ENCODE measurements at regions of chr1 and their contacts with region 1.

Region 1: DNA sequence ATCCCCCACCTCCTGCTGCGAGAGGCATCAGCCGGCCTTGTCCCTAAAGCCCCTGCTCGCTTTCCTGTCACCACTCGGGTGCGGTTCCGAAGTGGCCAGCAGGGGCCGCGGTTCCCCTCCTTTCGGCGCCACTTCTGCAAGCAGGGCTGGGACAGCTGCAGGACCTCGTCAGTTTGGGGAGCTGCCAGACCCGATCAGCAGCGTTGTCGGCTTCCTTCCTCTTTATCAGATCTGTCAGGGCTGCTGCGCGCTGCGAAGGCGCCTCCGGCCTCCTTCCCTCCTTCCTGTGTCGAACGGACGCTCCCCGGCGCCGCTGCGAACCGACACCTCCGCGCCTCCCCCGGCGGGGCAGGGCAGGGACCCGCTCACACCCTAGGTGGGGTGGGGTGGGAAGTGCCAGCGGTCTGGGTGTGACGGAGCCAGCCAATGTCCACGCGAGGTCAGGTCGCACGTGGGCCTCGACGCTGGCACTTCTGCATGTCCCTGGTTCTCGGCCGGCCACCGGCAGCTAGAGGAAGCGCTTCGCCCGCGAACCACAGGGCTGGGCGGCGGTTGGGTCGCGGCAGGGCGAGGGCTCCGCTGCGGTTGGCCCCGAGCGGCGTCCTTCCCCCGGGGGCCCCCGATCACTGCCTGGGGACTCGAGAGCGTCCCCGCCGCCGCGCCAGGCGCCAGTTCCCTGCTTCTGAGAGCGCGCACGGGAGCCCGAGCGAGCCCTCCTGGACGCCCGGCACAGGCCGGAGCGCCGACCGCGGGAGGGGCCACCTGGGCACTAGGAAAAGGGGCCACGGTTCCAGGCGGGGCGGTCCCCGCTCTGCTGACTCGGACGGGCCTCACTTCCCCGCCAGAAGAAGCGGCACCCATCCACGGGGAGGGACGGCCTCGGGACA is 81.8 kb downstream of the RUNX3 start:
- DNase-seq: peak; percentile 94
- ATAC-seq: peak; percentile 95
- H3K4me3 Mint-ChIP-seq: peak overlapping the region; percentile 58
- H3K27ac Mint-ChIP-seq: no peak overlapping the region
- H3K4me1 Mint-ChIP-seq: peaks cover 8% of the 10 kb centered on the region
- H3K27me3 Mint-ChIP-seq: no peaks in the 10 kb centered on the region

Region 2: GRCh38 chr1:24659993-24660665 is 188.1 kb before region 1 on chr1:
- CTCF ChIA-PET with region 1: no interaction called
- POLR2A ChIA-PET with region 1: no interaction called
- intact Hi-C with region 1: no loop called
- DNase-seq: no peak
- ATAC-seq: no peak
- H3K4me3 Mint-ChIP-seq: no peak overlapping the region
- H3K27ac Mint-ChIP-seq: peak overlapping the region; percentile 72
- H3K4me1 Mint-ChIP-seq: peaks cover 31% of the 10 kb centered on the region
- H3K27me3 Mint-ChIP-seq: no peaks in the 10 kb centered on the region

Region 3: GRCh38 chr1:24830680-24831272 is 17.5 kb before region 1 on chr1:
- CTCF ChIA-PET with region 1: interaction called, 15 read pairs
- POLR2A ChIA-PET with region 1: no interaction called
- intact Hi-C with region 1: no loop called
- DNase-seq: no peak
- ATAC-seq: peak; percentile 36
- H3K4me3 Mint-ChIP-seq: no peak overlapping the region
- H3K27ac Mint-ChIP-seq: no peak overlapping the region
- H3K4me1 Mint-ChIP-seq: no peaks in the 10 kb centered on the region
- H3K27me3 Mint-ChIP-seq: no peaks in the 10 kb centered on the region

Region 4: GRCh38 chr1:24925082-24925779 is 77.0 kb after region 1 on chr1:
- CTCF ChIA-PET with region 1: interaction called, 6 read pairs
- POLR2A ChIA-PET with region 1: no interaction called
- intact Hi-C with region 1: loop called in 1 of 2 experiments (anchors 1 kb)
- DNase-seq: peak; percentile 92
- ATAC-seq: peak; percentile 45
- H3K4me3 Mint-ChIP-seq: peak overlapping the region; percentile 80
- H3K27ac Mint-ChIP-seq: peak overlapping the region; percentile 91
- H3K4me1 Mint-ChIP-seq: peaks cover 70% of the 10 kb centered on the region
- H3K27me3 Mint-ChIP-seq: no peaks in the 10 kb centered on the region

Region 5: GRCh38 chr1:25099343-25099951 is 251.2 kb after region 1 on chr1:
- CTCF ChIA-PET with region 1: interaction called, 21 read pairs
- POLR2A ChIA-PET with region 1: interaction called, 5 read pairs
- intact Hi-C with region 1: loop called (anchors 1 kb)
- DNase-seq: peak; percentile 52
- ATAC-seq: peak; percentile 54
- H3K4me3 Mint-ChIP-seq: no peak overlapping the region
- H3K27ac Mint-ChIP-seq: peak overlapping the region; percentile 62
- H3K4me1 Mint-ChIP-seq: peaks cover 58% of the 10 kb centered on the region
- H3K27me3 Mint-ChIP-seq: no peaks in the 10 kb centered on the region

Region 6: DNA sequence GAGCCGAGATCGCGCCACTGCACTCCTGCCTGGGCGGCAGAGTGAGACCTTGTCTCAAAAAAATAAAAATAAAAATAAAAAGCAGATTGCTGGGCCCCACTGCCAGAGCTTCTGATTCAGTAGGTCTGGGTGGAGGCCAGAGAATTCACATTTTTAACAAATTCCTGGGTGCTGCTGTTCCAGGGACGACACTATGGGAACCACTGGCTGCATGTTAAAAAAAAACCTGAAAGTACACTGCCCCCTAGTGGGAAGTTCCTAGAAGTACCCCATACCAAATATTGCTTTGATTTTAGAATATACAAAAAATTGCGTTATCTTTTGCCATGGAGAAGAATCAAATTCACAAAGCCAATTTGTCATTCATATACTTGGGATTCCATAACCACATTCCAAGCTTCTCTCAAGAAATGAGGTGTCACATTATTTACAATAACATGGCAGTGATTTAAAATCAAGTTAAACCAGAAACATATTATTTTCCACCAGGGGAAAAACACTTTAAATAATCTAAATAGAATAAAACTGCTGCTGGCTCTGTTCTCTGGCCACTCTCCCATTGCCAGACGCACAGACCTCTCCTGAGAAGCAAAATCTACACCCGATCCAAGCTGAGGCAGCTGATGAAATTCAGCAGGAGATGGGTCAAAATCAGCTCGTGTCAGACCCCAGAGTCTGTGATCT is 356.7 kb after region 1 on chr1:
- CTCF ChIA-PET with region 1: interaction called, 14 read pairs
- POLR2A ChIA-PET with region 1: no interaction called
- intact Hi-C with region 1: loop called (anchors 1 to 2 kb)
- DNase-seq: peak; percentile 20
- ATAC-seq: peak; percentile 58
- H3K4me3 Mint-ChIP-seq: no peak overlapping the region
- H3K27ac Mint-ChIP-seq: no peak overlapping the region
- H3K4me1 Mint-ChIP-seq: no peaks in the 10 kb centered on the region
- H3K27me3 Mint-ChIP-seq: no peaks in the 10 kb centered on the region